OCI-LY7 (cell line): ENCODE measurements at regions of chr13 and their contacts with region 1.

Region 1: GRCh38 chr13:49464621-49465325 is 20.7 kb downstream of the SETDB2 start:
- DNase-seq: no peak
- H3K4me3 ChIP-seq: no peak overlapping the region
- H3K27ac ChIP-seq: no peak overlapping the region
- H3K4me1 ChIP-seq: no peaks in the 10 kb centered on the region
- CTCF ChIP-seq: no peak

Region 2: GRCh38 chr13:49481788-49482187 is 17.0 kb after region 1 on chr13:
- CTCF ChIA-PET with region 1: no interaction called
- POLR2A ChIA-PET with region 1: interaction called, 10 read pairs
- intact Hi-C with region 1: no loop called
- DNase-seq: no peak
- H3K4me3 ChIP-seq: no peak overlapping the region
- H3K27ac ChIP-seq: no peak overlapping the region
- H3K4me1 ChIP-seq: no peaks in the 10 kb centered on the region
- CTCF ChIP-seq: no peak

Region 3: DNA sequence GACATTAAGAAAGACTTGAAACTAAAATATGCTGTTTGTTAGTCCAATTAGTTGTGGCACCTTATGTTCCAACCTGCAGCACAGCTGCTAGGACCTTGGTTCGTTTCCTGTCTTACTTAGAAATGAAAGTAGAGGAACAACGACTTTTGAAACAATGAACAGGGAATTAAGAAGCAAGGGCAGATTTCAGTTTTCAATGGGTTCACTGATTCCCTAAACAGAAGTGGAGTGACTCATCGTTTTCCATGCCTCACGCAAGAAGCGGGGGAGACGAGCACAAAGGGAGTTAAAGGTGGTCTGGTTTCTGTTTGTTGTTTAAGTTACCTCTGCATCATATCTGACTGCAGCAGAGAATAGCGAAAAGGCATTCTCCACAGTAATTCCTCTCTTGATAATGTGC is 75.8 kb after region 1 on chr13:
- CTCF ChIA-PET with region 1: no interaction called
- POLR2A ChIA-PET with region 1: no interaction called
- intact Hi-C with region 1: no loop called
- DNase-seq: peak; percentile 69
- H3K4me3 ChIP-seq: peak overlapping the region; percentile 61
- H3K27ac ChIP-seq: peak overlapping the region; percentile 81
- H3K4me1 ChIP-seq: peaks cover 42% of the 10 kb centered on the region
- CTCF ChIP-seq: no peak